Calu3 (cell line): ENCODE measurements at regions of chr7 and their contacts with region 1.

Region 1: DNA sequence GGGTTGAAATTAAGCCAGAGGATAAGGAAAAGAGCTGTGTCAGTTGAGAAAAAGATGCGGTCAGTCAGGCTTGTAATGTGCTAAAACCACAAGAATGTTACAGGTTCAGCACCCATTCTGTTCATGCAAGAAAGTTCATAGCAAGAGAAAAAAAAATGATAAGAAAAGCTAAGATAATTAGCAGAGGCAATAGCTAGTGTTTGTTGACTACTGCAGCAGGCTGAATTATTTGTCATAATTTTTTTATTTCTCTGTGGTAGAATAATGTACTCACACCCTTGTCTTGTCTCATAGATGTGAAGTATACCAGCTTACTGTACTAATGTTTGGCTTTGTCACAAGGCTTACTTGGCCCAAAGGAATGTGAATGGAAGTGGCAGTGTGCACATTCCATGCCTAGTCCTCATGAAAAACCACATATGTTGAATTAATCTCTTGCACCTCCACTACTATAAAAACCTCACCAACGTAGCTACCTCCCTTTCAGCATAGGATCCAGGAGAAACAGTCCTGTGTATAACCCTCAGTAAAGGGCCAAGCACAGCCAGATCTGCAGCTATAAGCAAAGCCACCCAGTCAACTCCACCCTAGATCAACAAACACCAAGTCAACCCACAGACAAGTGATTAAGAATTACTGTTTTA is 74.8 kb downstream of the CRPPA start:
- DNase-seq: peak; percentile 63
- H3K4me3 Mint-ChIP-seq: peak overlapping the region; percentile 8
- H3K27ac Mint-ChIP-seq: peak overlapping the region; percentile 48
- H3K4me1 Mint-ChIP-seq: peaks cover 57% of the 10 kb centered on the region
- H3K27me3 Mint-ChIP-seq: no peaks in the 10 kb centered on the region
- CTCF ChIP-seq: no peak

Region 2: DNA sequence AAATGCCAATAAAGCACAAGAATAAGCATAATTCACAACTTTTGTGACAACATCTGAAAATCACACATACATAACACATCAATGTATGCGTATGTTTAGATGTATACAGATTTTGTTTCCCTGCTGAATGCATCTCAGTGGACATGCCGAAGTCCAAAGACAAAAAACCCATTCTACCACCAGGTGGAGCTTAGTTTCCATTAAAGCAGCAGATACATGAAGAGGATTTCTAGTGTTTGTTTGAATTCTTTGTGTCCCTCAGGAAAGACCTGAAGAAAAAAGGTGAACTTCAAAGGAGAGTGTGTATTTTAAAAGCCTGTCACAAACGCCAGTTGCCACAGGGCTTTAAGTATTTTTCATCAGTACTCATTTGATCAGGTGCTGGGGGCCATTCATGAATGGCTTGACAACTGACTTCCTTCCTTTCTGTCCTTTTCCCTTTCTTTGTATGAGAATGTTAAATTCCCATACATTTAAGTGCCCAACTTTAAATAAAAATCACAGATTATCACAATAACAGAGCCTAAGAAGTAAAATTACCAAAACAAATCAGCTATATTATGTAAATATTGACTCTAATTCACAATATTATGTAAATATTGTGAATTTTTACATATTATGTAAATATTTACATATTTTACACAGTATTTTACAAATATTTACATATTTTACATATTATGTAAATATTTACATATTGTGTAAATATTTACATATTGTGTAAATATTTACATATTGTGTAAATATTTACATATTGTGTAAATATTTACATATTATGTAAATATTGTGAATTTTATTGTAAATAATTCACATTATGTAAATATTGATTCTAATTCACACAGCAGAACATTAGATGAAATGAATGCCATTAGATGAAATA is 268.2 kb before region 1 on chr7:
- CTCF ChIA-PET with region 1: no interaction called
- intact Hi-C with region 1: no loop called
- DNase-seq: peak; percentile 78
- H3K4me3 Mint-ChIP-seq: no peak overlapping the region
- H3K27ac Mint-ChIP-seq: peak overlapping the region; percentile 71
- H3K4me1 Mint-ChIP-seq: peaks cover 31% of the 10 kb centered on the region
- H3K27me3 Mint-ChIP-seq: no peaks in the 10 kb centered on the region
- CTCF ChIP-seq: peak; percentile 92

Region 3: GRCh38 chr7:16129431-16130116 is 216.9 kb before region 1 on chr7:
- CTCF ChIA-PET with region 1: interaction called, 4 read pairs
- intact Hi-C with region 1: loop called (anchors 2 kb)
- DNase-seq: peak; percentile 30
- H3K4me3 Mint-ChIP-seq: peak overlapping the region; percentile 3
- H3K27ac Mint-ChIP-seq: peak overlapping the region; percentile 92
- H3K4me1 Mint-ChIP-seq: peaks cover 35% of the 10 kb centered on the region
- H3K27me3 Mint-ChIP-seq: no peaks in the 10 kb centered on the region
- CTCF ChIP-seq: no peak

Region 4: GRCh38 chr7:16193631-16194030 is 152.9 kb before region 1 on chr7:
- CTCF ChIA-PET with region 1: no interaction called
- intact Hi-C with region 1: no loop called
- DNase-seq: no peak
- H3K4me3 Mint-ChIP-seq: no peak overlapping the region
- H3K27ac Mint-ChIP-seq: no peak overlapping the region
- H3K4me1 Mint-ChIP-seq: peaks cover 17% of the 10 kb centered on the region
- H3K27me3 Mint-ChIP-seq: no peaks in the 10 kb centered on the region
- CTCF ChIP-seq: no peak

Region 5: GRCh38 chr7:16295558-16295957 is 50.9 kb before region 1 on chr7:
- CTCF ChIA-PET with region 1: interaction called, 4 read pairs
- intact Hi-C with region 1: loop called (anchors 5 kb)
- DNase-seq: no peak
- H3K4me3 Mint-ChIP-seq: no peak overlapping the region
- H3K27ac Mint-ChIP-seq: no peak overlapping the region
- H3K4me1 Mint-ChIP-seq: peaks cover 44% of the 10 kb centered on the region
- H3K27me3 Mint-ChIP-seq: no peaks in the 10 kb centered on the region
- CTCF ChIP-seq: no peak

Region 6: GRCh38 chr7:16318989-16319915 is 27.2 kb before region 1 on chr7:
- CTCF ChIA-PET with region 1: interaction called, 18 read pairs
- intact Hi-C with region 1: loop called (anchors 1 kb)
- DNase-seq: peak; percentile 25
- H3K4me3 Mint-ChIP-seq: peak overlapping the region; percentile 11
- H3K27ac Mint-ChIP-seq: peak overlapping the region; percentile 86
- H3K4me1 Mint-ChIP-seq: peaks cover 57% of the 10 kb centered on the region
- H3K27me3 Mint-ChIP-seq: no peaks in the 10 kb centered on the region
- CTCF ChIP-seq: no peak

Region 7: DNA sequence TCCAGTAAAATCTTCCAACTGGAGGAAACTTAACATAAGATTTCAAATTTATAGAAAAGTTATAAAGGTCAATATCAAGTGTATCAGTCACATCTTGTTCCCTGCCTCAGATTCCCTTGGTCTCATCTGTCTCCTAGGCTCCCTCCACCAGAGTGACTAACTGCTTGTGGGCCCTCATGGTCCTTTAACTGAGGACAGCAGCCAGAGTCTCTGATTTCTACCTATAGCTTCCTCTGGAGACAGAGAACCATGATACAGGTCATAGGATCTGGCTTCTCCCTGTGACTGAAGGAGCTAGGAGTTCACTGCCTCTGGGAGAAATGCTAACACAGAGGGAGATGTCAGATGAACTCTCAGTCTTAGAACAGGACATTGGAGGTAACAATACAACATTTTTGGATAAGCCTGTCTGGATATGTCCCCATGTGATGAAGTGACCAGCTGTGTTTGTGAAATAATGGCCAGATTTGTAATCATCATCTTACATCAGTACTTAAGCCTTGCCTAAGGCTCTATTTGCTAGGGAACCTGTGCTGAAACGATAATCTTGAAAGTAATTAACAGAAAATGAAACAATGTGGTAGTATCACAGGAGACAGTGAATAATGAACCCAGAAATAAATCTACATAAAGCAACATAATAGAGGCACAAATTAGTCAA is 18.5 kb after region 1 on chr7:
- CTCF ChIA-PET with region 1: no interaction called
- intact Hi-C with region 1: loop called (anchors 2 kb)
- DNase-seq: no peak
- H3K4me3 Mint-ChIP-seq: no peak overlapping the region
- H3K27ac Mint-ChIP-seq: peak overlapping the region; percentile 72
- H3K4me1 Mint-ChIP-seq: peaks cover 62% of the 10 kb centered on the region
- H3K27me3 Mint-ChIP-seq: no peaks in the 10 kb centered on the region
- CTCF ChIP-seq: no peak

Region 8: DNA sequence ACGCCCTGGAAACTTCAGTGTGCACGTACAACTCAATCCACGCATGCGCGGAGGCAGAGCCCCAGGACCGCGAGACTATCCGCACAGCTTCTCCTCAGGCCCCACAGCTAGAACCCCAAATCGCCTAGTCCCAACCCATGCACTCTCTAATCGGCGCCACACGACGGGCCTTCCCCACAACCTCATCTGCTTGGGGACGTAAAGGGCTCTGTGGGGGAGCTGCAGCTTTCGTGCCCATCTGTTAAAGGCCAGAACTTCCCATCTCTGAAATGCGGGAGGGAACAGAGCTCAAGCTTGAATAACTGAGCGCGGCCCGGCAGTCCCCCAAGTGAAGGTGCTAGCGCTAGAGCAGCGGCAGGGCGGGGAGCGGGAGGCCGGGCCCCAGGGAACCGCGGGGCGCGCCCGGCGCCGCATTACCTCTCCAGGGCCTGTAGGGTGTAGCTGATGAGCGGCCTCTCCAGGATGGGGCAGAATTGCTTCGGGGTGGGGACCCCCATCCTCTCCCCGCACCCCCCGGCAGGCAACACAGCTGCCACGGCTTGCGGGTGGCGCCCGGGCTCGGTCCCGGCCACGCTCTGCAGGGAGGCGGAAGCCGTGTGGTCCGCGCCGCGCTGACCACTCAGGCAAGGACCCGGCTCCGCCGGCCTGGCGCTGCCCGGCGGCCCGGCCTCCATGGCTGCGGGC is 74.3 kb after region 1 on chr7:
- CTCF ChIA-PET with region 1: interaction called, 3 read pairs
- intact Hi-C with region 1: loop called (anchors 2 kb)
- DNase-seq: peak; percentile 93
- H3K4me3 Mint-ChIP-seq: peak overlapping the region; percentile 74
- H3K27ac Mint-ChIP-seq: peak overlapping the region; percentile 86
- H3K4me1 Mint-ChIP-seq: peaks cover 53% of the 10 kb centered on the region
- H3K27me3 Mint-ChIP-seq: no peaks in the 10 kb centered on the region
- CTCF ChIP-seq: peak; percentile 67

Region 9: GRCh38 chr7:16439012-16439411 is 92.5 kb after region 1 on chr7:
- CTCF ChIA-PET with region 1: no interaction called
- intact Hi-C with region 1: no loop called
- DNase-seq: no peak
- H3K4me3 Mint-ChIP-seq: no peak overlapping the region
- H3K27ac Mint-ChIP-seq: no peak overlapping the region
- H3K4me1 Mint-ChIP-seq: peaks cover 9% of the 10 kb centered on the region
- H3K27me3 Mint-ChIP-seq: no peaks in the 10 kb centered on the region
- CTCF ChIP-seq: no peak